ENCODE measurements at regions of chr18 and their contacts with region 1.

Region 1: DNA sequence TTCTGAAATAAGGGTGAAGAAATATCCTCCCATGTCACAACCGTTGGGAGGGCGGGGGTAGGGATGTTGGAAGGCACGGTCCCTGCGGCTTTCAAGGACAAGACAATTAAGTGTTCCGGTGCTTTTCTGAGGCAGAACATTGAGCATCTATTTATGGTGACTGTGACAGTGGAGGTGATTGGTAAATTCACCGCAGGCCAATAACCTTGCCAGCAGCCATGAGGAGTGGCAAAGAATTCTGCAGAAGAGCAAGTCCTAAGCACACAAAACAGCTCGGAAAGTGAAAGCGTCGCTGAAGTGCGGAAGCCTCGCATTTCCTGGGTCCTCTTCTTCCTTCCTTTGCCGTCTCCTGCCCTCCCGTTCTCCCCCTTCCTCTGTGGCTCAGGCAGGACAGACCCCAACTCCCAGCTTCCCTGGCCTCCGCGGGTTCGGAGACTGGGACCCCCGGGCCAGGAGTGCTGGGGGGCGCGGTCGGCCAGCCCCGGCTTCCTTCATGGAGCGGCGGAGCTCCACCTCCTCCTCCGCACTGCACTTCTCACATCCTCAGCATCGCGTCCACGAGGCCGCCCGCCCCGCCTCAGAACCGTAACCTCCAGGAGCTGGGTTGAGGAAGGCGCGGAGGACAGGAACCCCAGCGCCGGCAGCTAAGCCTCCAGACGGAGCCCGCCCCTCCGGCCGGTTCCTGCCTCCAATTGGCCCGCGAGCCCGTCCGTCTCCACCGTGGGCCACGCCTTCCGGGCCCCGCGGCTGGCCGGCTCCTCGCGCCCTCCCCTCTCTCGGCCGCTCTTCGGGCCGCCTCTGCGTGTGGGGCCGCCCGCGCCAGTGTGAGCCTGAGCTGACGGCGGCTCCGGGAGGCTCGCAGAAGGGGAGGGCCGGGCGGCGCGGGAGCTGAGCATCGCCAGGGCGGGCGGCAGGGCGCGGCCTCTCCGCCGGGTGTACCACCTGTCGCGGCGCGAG is at the start of gene ME2:
- DNase-seq: peak; percentile 82 to 95 (median 89)
- ATAC-seq: peak; percentile 94
- H3K4me3 ChIP-seq: peak within 1 kb of the TSS; percentile 61
- H3K4me3 Mint-ChIP-seq: peak within 1 kb of the TSS; percentile 95 to 99 (median 97)
- H3K27ac ChIP-seq: peak within 1 kb of the TSS; percentile 98
- H3K27ac Mint-ChIP-seq: peak within 1 kb of the TSS; percentile 93 to 99 (median 98)
- H3K4me1 ChIP-seq: peaks cover 17% of the 10 kb centered on the region in 2 donors
- H3K4me1 Mint-ChIP-seq: peaks cover 18 to 37% (median 34%) of the 10 kb centered on the region in 7 donors
- H3K27me3 ChIP-seq: no peaks in the 10 kb centered on the region
- H3K27me3 Mint-ChIP-seq: peaks cover 0 to 11% (median 4%) of the 10 kb centered on the region in 5 donors
- total RNA-seq, gene ME2: 29.4 to 84.7 (median 43.2) TPM

Region 2: GRCh38 chr18:50742952-50743351 is 135.7 kb before region 1 on chr18:
- CTCF ChIA-PET with region 1: no interaction called
- POLR2A ChIA-PET with region 1: no interaction called
- intact Hi-C with region 1: no loop called
- DNase-seq: no peak
- ATAC-seq: no peak
- H3K4me3 ChIP-seq: no peak overlapping the region
- H3K4me3 Mint-ChIP-seq: no peak overlapping the region
- H3K27ac ChIP-seq: no peak overlapping the region
- H3K27ac Mint-ChIP-seq: no peak overlapping the region
- H3K4me1 ChIP-seq: no peaks in the 10 kb centered on the region
- H3K4me1 Mint-ChIP-seq: no peaks in the 10 kb centered on the region
- H3K27me3 ChIP-seq: no peaks in the 10 kb centered on the region
- H3K27me3 Mint-ChIP-seq: peaks cover 4 to 23% (median 12%) of the 10 kb centered on the region in 5 donors

Region 3: DNA sequence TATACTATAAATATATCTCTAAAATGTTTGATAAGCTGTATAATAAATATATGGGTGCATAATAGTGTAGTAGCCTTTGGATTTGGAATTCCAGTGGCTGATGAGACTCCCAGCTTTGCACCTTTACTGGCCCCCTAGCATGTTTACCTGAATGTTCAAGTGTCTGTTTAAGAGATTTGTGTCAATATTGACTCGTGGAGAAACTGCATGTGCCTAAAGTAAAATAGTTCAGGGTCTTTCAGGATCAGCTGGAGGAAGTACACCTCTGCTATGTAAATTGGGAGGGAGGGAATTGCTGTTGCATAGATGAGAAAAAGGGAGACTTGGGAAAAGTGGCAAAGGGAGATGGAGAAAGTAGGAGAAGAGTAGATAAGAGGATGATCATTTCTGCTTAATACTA is 24.2 kb after region 1 on chr18:
- CTCF ChIA-PET with region 1: no interaction called
- POLR2A ChIA-PET with region 1: no interaction called
- intact Hi-C with region 1: loop called in 1 of 2 experiments (anchors 2 kb)
- DNase-seq: no peak
- ATAC-seq: no peak
- H3K4me3 ChIP-seq: no peak overlapping the region
- H3K4me3 Mint-ChIP-seq: no peak overlapping the region
- H3K27ac ChIP-seq: no peak overlapping the region
- H3K27ac Mint-ChIP-seq: peak overlapping the region in 1 of 9 donors; percentile 0
- H3K4me1 ChIP-seq: no peaks in the 10 kb centered on the region
- H3K4me1 Mint-ChIP-seq: peaks cover 8 to 31% (median 16%) of the 10 kb centered on the region in 7 donors
- H3K27me3 ChIP-seq: no peaks in the 10 kb centered on the region
- H3K27me3 Mint-ChIP-seq: no peaks in the 10 kb centered on the region

Region 4: GRCh38 chr18:50911006-50911405 is 32.4 kb after region 1 on chr18:
- CTCF ChIA-PET with region 1: interaction called, 3 read pairs
- POLR2A ChIA-PET with region 1: no interaction called
- intact Hi-C with region 1: loop called in 1 of 2 experiments (anchors 5 kb)
- DNase-seq: no peak
- ATAC-seq: no peak
- H3K4me3 ChIP-seq: no peak overlapping the region
- H3K4me3 Mint-ChIP-seq: no peak overlapping the region
- H3K27ac ChIP-seq: no peak overlapping the region
- H3K27ac Mint-ChIP-seq: peak overlapping the region in 1 of 9 donors; percentile 60
- H3K4me1 ChIP-seq: peaks cover 0 to 4% of the 10 kb centered on the region in 2 donors
- H3K4me1 Mint-ChIP-seq: peaks cover 9 to 27% (median 13%) of the 10 kb centered on the region in 7 donors
- H3K27me3 ChIP-seq: no peaks in the 10 kb centered on the region
- H3K27me3 Mint-ChIP-seq: no peaks in the 10 kb centered on the region

Region 5: DNA sequence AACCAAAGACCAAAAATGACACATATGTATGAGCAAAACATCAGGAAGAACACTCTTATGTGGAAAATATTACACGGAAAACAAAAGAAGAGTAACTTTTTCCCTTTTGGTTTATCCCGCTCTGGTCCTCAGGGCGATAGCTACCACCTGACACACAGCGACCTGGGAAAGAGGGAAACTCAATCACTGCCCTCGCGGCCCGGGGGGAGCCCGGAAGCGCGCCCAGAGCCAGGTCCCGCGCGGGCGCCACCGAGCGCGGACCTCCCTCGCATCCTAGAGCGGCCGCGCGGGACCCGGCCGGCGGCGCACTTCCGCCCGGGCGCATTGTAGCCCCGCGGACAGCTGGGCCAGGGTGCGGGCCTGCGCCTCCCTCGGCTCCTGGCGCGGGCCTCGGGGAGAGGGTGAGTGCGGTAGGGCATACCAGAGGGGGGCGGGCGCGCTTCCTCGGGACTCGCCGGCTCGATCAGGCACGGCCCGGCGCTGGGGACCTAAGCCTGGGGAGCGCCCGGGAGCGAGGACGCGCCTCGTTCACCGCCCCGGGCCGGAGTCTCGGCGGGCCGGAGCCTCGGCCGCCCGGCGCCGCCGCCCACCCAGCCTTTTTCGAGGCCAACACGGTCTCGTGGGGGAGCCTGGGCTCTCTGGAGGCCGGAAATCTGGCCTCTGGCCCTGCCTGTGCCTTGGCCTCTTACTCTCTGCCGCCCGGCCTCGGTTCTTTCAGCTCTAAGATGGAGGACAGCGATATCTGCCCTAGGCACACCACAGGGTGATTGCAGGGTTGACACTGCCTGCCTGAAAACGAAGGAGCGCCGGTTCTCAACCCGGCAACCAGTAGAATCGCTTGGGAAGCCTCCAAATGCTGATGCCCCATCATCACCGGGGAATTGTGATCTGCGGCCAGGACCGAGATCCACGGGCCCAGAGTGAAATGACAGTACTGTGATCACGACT is 89.4 kb after region 1 on chr18 and contains the start of gene ELAC1:
- CTCF ChIA-PET with region 1: interaction called, 4 read pairs
- POLR2A ChIA-PET with region 1: interaction called, 20 read pairs
- intact Hi-C with region 1: loop called (anchors 1 kb)
- DNase-seq: peak; percentile 48 to 75 (median 65)
- ATAC-seq: peak; percentile 93
- H3K4me3 ChIP-seq: peak within 1 kb of the TSS; percentile 80
- H3K4me3 Mint-ChIP-seq: peak within 1 kb of the TSS; percentile 86 to 98 (median 94)
- H3K27ac ChIP-seq: peak within 1 kb of the TSS; percentile 90
- H3K27ac Mint-ChIP-seq: peak within 1 kb of the TSS; percentile 77 to 95 (median 92)
- H3K4me1 ChIP-seq: peaks cover 8 to 13% of the 10 kb centered on the region in 2 donors
- H3K4me1 Mint-ChIP-seq: peaks cover 15 to 35% (median 29%) of the 10 kb centered on the region in 7 donors
- H3K27me3 ChIP-seq: no peaks in the 10 kb centered on the region
- H3K27me3 Mint-ChIP-seq: no peaks in the 10 kb centered on the region
- total RNA-seq, gene ELAC1: 4.3 to 11.2 (median 6.3) TPM

Region 6: GRCh38 chr18:51029694-51030536 is 151.3 kb after region 1 on chr18 and contains the start of gene SMAD4:
- CTCF ChIA-PET with region 1: interaction called, 3 read pairs
- POLR2A ChIA-PET with region 1: interaction called, 57 read pairs
- intact Hi-C with region 1: loop called (anchors 1 kb)
- DNase-seq: peak; percentile 95 to 99 (median 97)
- ATAC-seq: peak; percentile 89
- H3K4me3 ChIP-seq: peak within 1 kb of the TSS; percentile 63
- H3K4me3 Mint-ChIP-seq: peak within 1 kb of the TSS; percentile 96 to 100 (median 99)
- H3K27ac ChIP-seq: peak within 1 kb of the TSS; percentile 81
- H3K27ac Mint-ChIP-seq: peak within 1 kb of the TSS; percentile 95 to 100 (median 98)
- H3K4me1 ChIP-seq: peaks cover 13 to 40% of the 10 kb centered on the region in 2 donors
- H3K4me1 Mint-ChIP-seq: peaks cover 35 to 62% (median 57%) of the 10 kb centered on the region in 7 donors
- H3K27me3 ChIP-seq: no peaks in the 10 kb centered on the region
- H3K27me3 Mint-ChIP-seq: no peaks in the 10 kb centered on the region
- total RNA-seq, gene SMAD4: 82.5 to 170 (median 92.5) TPM

Region 7: GRCh38 chr18:51153659-51154371 is 275.2 kb after region 1 on chr18:
- CTCF ChIA-PET with region 1: interaction called, 3 read pairs
- POLR2A ChIA-PET with region 1: interaction called, 3 read pairs
- intact Hi-C with region 1: loop called in 1 of 2 experiments (anchors 2 kb)
- DNase-seq: peak; percentile 35 to 65 (median 55)
- ATAC-seq: peak; percentile 76
- H3K4me3 ChIP-seq: peak overlapping the region; percentile 52
- H3K4me3 Mint-ChIP-seq: peak overlapping the region; percentile 80 to 96 (median 87)
- H3K27ac ChIP-seq: peak overlapping the region; percentile 61
- H3K27ac Mint-ChIP-seq: peak overlapping the region; percentile 91 to 98 (median 94)
- H3K4me1 ChIP-seq: peaks cover 22 to 23% of the 10 kb centered on the region in 2 donors
- H3K4me1 Mint-ChIP-seq: peaks cover 19 to 44% (median 37%) of the 10 kb centered on the region in 7 donors
- H3K27me3 ChIP-seq: no peaks in the 10 kb centered on the region
- H3K27me3 Mint-ChIP-seq: no peaks in the 10 kb centered on the region

Region 8: GRCh38 chr18:51330148-51330547 is 451.5 kb after region 1 on chr18:
- CTCF ChIA-PET with region 1: no interaction called
- POLR2A ChIA-PET with region 1: no interaction called
- intact Hi-C with region 1: no loop called
- DNase-seq: no peak
- ATAC-seq: no peak
- H3K4me3 ChIP-seq: no peak overlapping the region
- H3K4me3 Mint-ChIP-seq: no peak overlapping the region
- H3K27ac ChIP-seq: no peak overlapping the region
- H3K27ac Mint-ChIP-seq: no peak overlapping the region
- H3K4me1 ChIP-seq: no peaks in the 10 kb centered on the region
- H3K4me1 Mint-ChIP-seq: no peaks in the 10 kb centered on the region
- H3K27me3 ChIP-seq: no peaks in the 10 kb centered on the region
- H3K27me3 Mint-ChIP-seq: peaks cover 2 to 22% (median 8%) of the 10 kb centered on the region in 5 donors

Measured in naive thymus-derived CD4-positive, alpha-beta T cell (primary cell).